Dorsolateral prefrontal cortex (tissue), 120 donors: ENCODE measurements at regions of chr6 and their contacts with region 1.

Region 1: GRCh38 chr6:35522660-35523658 is 10.3 kb upstream of the TULP1 start:
- DNase-seq: peak; percentile 29 to 72 (median 61)
- H3K4me3 ChIP-seq: peak overlapping the region in 15 of 59 donors; percentile 13 to 45 (median 28)
- H3K27ac ChIP-seq: no peak overlapping the region
- H3K27me3 ChIP-seq: no peaks in the 10 kb centered on the region
- CTCF ChIP-seq: peak; percentile 84 to 100 (median 98)

Region 2: GRCh38 chr6:35181933-35182612 is 340.9 kb before region 1 on chr6:
- intact Hi-C with region 1: no loop called
- DNase-seq: no peak
- H3K4me3 ChIP-seq: peak overlapping the region in 19 of 59 donors; percentile 5 to 40 (median 20)
- H3K27ac ChIP-seq: peak overlapping the region in 5 of 59 donors; percentile 24 to 68 (median 45)
- H3K27me3 ChIP-seq: peaks cover 0 to 5% (median 0%) of the 10 kb centered on the region in 45 donors
- CTCF ChIP-seq: no peak

Region 3: GRCh38 chr6:35569011-35569461 is 46.1 kb after region 1 on chr6:
- intact Hi-C with region 1: loop called in 1 of 2 experiments (anchors 5 kb)
- DNase-seq: peak in 4 of 10 donors; percentile 20 to 48 (median 33)
- H3K4me3 ChIP-seq: no peak overlapping the region
- H3K27ac ChIP-seq: no peak overlapping the region
- H3K27me3 ChIP-seq: peaks cover 0 to 4% (median 0%) of the 10 kb centered on the region in 45 donors
- CTCF ChIP-seq: peak in 45 of 56 donors; percentile 18 to 62 (median 36)

Region 4: DNA sequence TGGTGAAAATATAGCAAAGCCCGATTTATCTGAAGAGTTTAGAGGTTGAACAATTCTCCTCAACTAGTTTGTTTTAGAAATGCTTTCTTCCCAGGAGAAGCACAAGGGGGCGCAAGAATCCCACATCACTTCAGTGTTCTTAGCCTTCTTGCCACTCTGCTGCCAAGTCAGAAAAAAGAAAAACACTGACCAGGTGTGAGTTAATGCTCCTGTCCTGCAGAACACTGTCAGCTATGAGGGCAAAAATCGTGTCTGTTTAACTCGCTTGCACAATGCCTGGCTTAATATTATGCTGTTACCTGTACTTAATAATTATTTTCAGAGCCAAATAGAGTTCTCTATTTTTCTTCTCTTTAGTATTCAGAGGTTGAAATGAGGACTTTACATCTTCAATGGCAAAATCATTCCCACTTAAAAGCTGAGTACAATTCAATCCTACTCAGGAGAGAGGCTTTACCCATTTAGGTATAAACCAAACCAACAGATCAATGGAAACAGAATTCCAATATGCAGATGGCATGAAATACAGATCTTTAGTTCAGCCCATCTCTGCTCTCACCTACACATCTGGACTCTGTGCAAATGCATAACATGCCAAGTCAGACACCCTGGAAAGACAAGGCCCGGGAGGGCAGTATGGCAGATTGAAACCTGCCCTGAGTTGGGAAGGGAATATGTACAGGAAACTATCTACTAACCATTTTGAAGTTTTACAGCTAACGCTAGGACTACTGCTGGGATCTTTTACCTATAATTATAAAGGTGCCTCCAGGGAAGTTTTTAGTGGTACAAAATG is 61.1 kb after region 1 on chr6:
- intact Hi-C with region 1: loop called in 1 of 2 experiments (anchors 5 kb)
- DNase-seq: peak in 7 of 10 donors; percentile 43 to 81 (median 66)
- H3K4me3 ChIP-seq: no peak overlapping the region
- H3K27ac ChIP-seq: peak overlapping the region in 42 of 59 donors; percentile 0 to 78 (median 42)
- H3K27me3 ChIP-seq: no peaks in the 10 kb centered on the region
- CTCF ChIP-seq: peak; percentile 67 to 98 (median 89)

Region 5: GRCh38 chr6:35737413-35738211 is 214.7 kb after region 1 on chr6:
- intact Hi-C with region 1: loop called (anchors 1 to 2 kb)
- DNase-seq: peak in 1 of 10 donors; percentile 9
- H3K4me3 ChIP-seq: no peak overlapping the region
- H3K27ac ChIP-seq: peak overlapping the region in 10 of 59 donors; percentile 11 to 100 (median 34)
- H3K27me3 ChIP-seq: no peaks in the 10 kb centered on the region
- CTCF ChIP-seq: peak; percentile 73 to 98 (median 95)